ENCODE measurements at regions of chrX and their contacts with region 1.

Region 1: GRCh38 chrX:70096052-70096451 is 33.8 kb downstream of the OTUD6A start:
- DNase-seq: no peak
- ATAC-seq: no peak
- H3K4me3 ChIP-seq: no peak overlapping the region
- H3K27ac ChIP-seq: no peak overlapping the region
- H3K4me1 ChIP-seq: no peaks in the 10 kb centered on the region
- H3K27me3 ChIP-seq: 0 out of 2 replicates have a peak, but pooled peaks cover 2% of the 10 kb centered on the region
- CTCF ChIP-seq: peak; percentile 36

Region 2: GRCh38 chrX:69538321-69538876 is 557.7 kb before region 1 on chrX:
- CTCF ChIA-PET with region 1: interaction called, 7 read pairs
- POLR2A ChIA-PET with region 1: no interaction called
- in situ Hi-C with region 1: no loop called
- intact Hi-C with region 1: loop called (anchors 10 kb)
- DNase-seq: no peak
- ATAC-seq: peak; percentile 97
- H3K4me3 ChIP-seq: peak overlapping the region; percentile 34 to 52
- H3K27ac ChIP-seq: no peak overlapping the region
- H3K4me1 ChIP-seq: no peaks in the 10 kb centered on the region
- H3K27me3 ChIP-seq: no peaks in the 10 kb centered on the region; the same call in 1 of the 2 replicates
- CTCF ChIP-seq: peak; percentile 86

Region 3: GRCh38 chrX:69906447-69906846 is 189.6 kb before region 1 on chrX:
- CTCF ChIA-PET with region 1: no interaction called
- POLR2A ChIA-PET with region 1: no interaction called
- in situ Hi-C with region 1: no loop called
- intact Hi-C with region 1: no loop called
- DNase-seq: no peak
- ATAC-seq: no peak
- H3K4me3 ChIP-seq: no peak overlapping the region
- H3K27ac ChIP-seq: no peak overlapping the region
- H3K4me1 ChIP-seq: no peaks in the 10 kb centered on the region
- H3K27me3 ChIP-seq: no peaks in the 10 kb centered on the region
- CTCF ChIP-seq: no peak

Region 4: GRCh38 chrX:70030301-70030767 is 65.7 kb before region 1 on chrX:
- CTCF ChIA-PET with region 1: interaction called, 6 read pairs
- POLR2A ChIA-PET with region 1: no interaction called
- in situ Hi-C with region 1: no loop called
- intact Hi-C with region 1: loop called (anchors 2 kb)
- DNase-seq: peak; percentile 25
- ATAC-seq: peak; percentile 73
- H3K4me3 ChIP-seq: no peak overlapping the region
- H3K27ac ChIP-seq: no peak overlapping the region
- H3K4me1 ChIP-seq: no peaks in the 10 kb centered on the region
- H3K27me3 ChIP-seq: no peaks in the 10 kb centered on the region
- CTCF ChIP-seq: peak; percentile 83

Measured in Panc1 (cell line).